Motor neuron (in vitro differentiated cells): ENCODE measurements at regions of chr11 and their contacts with region 1.

Region 1: DNA sequence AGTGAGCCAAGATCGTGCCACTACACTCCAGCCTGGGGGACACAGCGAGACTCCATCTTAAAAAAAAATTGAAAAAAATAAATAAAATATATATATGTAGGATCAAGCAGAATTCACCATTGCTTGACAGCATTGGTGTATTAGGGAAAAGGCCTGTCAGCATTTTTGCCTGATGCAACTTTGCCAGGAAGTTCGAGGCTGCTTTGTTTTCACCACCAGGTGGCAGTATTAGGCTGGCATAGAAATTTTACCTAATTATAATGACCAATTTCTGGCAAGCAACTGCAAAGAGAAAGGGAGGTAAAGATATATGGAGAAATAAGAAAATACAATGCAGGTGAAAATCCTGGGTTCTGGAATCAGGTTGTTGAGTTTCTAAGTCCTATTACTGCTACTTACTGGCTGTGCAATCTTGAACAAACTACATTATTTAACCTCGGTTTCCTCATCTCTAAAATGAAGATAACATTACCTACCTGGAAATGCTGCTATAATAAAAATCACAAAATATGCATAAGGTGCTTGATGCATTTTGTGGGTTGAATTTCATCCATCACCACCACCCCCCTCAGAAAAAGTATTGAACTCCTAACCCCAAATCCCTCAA is 24.7 kb downstream of the LAYN start:
- ATAC-seq: peak in 4 of 8 experiments; percentile 20 to 52 (median 30)
- H3K4me3 ChIP-seq: no peak overlapping the region
- H3K27ac ChIP-seq: no peak overlapping the region
- H3K4me1 ChIP-seq: peaks cover 7 to 9% of the 10 kb centered on the region in 2 donors

Region 2: GRCh38 chr11:111454561-111455192 is 110.5 kb before region 1 on chr11:
- in situ Hi-C with region 1: loop called in 1 of 9 experiments (anchors 10 kb)
- ATAC-seq: peak; percentile 35 to 91 (median 72)
- H3K4me3 ChIP-seq: no peak overlapping the region
- H3K27ac ChIP-seq: no peak overlapping the region
- H3K4me1 ChIP-seq: no peaks in the 10 kb centered on the region